Motor neuron (in vitro differentiated cells): ENCODE measurements at regions of chr4 and their contacts with region 1.

Region 1: GRCh38 chr4:73019462-73020047 is 50.0 kb downstream of the COX18 start:
- ATAC-seq: peak in 1 of 8 experiments; percentile 26
- H3K4me3 ChIP-seq: no peak overlapping the region
- H3K27ac ChIP-seq: no peak overlapping the region
- H3K4me1 ChIP-seq: no peaks in the 10 kb centered on the region

Region 2: GRCh38 chr4:72302981-72303704 is 716.4 kb before region 1 on chr4:
- in situ Hi-C with region 1: loop called in 3 of 9 experiments (anchors 25 kb)
- ATAC-seq: peak; percentile 53 to 89 (median 69)
- H3K4me3 ChIP-seq: no peak overlapping the region
- H3K27ac ChIP-seq: no peak overlapping the region
- H3K4me1 ChIP-seq: no peaks in the 10 kb centered on the region

Region 3: GRCh38 chr4:72326692-72327632 is 692.6 kb before region 1 on chr4:
- in situ Hi-C with region 1: loop called in 4 of 9 experiments (anchors 25 kb)
- ATAC-seq: no peak
- H3K4me3 ChIP-seq: no peak overlapping the region
- H3K27ac ChIP-seq: no peak overlapping the region
- H3K4me1 ChIP-seq: no peaks in the 10 kb centered on the region

Region 4: DNA sequence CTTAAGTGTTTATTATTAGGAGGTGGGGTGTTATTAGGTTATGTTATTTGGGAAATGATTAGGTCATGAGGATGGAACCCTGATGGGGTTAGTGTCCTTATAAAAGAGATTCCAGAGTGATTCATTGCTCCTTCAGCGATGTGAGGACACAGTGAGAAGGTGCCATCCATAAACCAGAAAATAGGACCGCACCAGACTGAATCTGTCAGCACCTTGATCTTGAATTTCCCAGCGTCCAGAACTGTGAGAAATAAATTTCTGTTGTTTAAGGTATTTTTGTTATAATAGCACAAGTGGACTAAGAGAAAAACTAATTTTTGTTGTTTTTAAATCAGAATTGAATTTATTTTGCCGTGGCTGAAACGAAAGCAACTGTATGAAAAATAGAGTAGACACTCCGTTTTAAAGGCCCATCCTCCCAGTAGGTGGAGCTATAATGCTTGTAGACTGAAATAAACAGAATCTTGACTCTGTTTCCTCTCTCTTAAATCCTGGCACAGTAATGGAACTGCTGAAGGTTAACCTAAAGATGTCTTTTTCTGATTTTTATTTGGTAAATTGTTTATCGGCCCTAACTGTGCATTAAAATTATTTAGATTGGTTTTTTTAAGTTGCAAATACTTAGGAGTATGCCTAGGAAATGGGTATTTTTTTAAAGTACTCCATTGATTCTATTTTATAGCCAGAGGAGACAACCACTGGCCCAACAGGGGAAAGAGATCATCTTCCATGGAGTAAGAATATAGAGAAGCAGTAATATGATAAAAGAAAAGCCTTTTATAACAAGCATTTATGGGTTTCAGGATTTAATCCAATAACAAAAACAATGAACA is 317.4 kb before region 1 on chr4:
- in situ Hi-C with region 1: loop called in 4 of 9 experiments (anchors 25 kb)
- ATAC-seq: peak in 4 of 8 experiments; percentile 39 to 90 (median 80)
- H3K4me3 ChIP-seq: peak overlapping the region in 1 of 5 donors; percentile 27
- H3K27ac ChIP-seq: no peak overlapping the region
- H3K4me1 ChIP-seq: no peaks in the 10 kb centered on the region